Naive thymus-derived CD4-positive, alpha-beta T cell (primary cell): ENCODE measurements at regions of chr2 and their contacts with region 1.

Region 1: GRCh38 chr2:32010670-32011484 is at the start of gene MEMO1:
- DNase-seq: peak; percentile 82 to 96 (median 94)
- ATAC-seq: peak; percentile 88
- H3K4me3 ChIP-seq: peak within 1 kb of the TSS; percentile 76
- H3K4me3 Mint-ChIP-seq: peak within 1 kb of the TSS; percentile 77 to 95 (median 92)
- H3K27ac ChIP-seq: peak within 1 kb of the TSS; percentile 80
- H3K27ac Mint-ChIP-seq: peak within 1 kb of the TSS; percentile 86 to 96 (median 93)
- H3K4me1 ChIP-seq: peaks cover 28% of the 10 kb centered on the region in 2 donors
- H3K4me1 Mint-ChIP-seq: peaks cover 26 to 55% (median 43%) of the 10 kb centered on the region in 7 donors
- H3K27me3 ChIP-seq: no peaks in the 10 kb centered on the region
- H3K27me3 Mint-ChIP-seq: peaks cover 0 to 3% (median 0%) of the 10 kb centered on the region in 5 donors
- total RNA-seq, gene MEMO1: 44.5 to 49.2 (median 47.9) TPM

Region 2: GRCh38 chr2:31475692-31476091 is 535.2 kb before region 1 on chr2:
- CTCF ChIA-PET with region 1: no interaction called
- POLR2A ChIA-PET with region 1: no interaction called
- intact Hi-C with region 1: no loop called
- DNase-seq: no peak
- ATAC-seq: no peak
- H3K4me3 ChIP-seq: no peak overlapping the region
- H3K4me3 Mint-ChIP-seq: no peak overlapping the region
- H3K27ac ChIP-seq: no peak overlapping the region
- H3K27ac Mint-ChIP-seq: no peak overlapping the region
- H3K4me1 ChIP-seq: no peaks in the 10 kb centered on the region
- H3K4me1 Mint-ChIP-seq: no peaks in the 10 kb centered on the region
- H3K27me3 ChIP-seq: peaks cover 0 to 4% of the 10 kb centered on the region in 2 donors
- H3K27me3 Mint-ChIP-seq: peaks cover 0 to 38% (median 15%) of the 10 kb centered on the region in 5 donors

Region 3: GRCh38 chr2:31812051-31812798 is 198.7 kb before region 1 on chr2:
- CTCF ChIA-PET with region 1: no interaction called
- POLR2A ChIA-PET with region 1: no interaction called
- intact Hi-C with region 1: no loop called
- DNase-seq: peak in 7 of 9 donors; percentile 8 to 29 (median 23)
- ATAC-seq: peak; percentile 82
- H3K4me3 ChIP-seq: no peak overlapping the region
- H3K4me3 Mint-ChIP-seq: peak overlapping the region; percentile 3 to 62 (median 47)
- H3K27ac ChIP-seq: peak overlapping the region; percentile 40
- H3K27ac Mint-ChIP-seq: peak overlapping the region; percentile 38 to 89 (median 70)
- H3K4me1 ChIP-seq: peaks cover 0 to 8% of the 10 kb centered on the region in 2 donors
- H3K4me1 Mint-ChIP-seq: peaks cover 6 to 28% (median 19%) of the 10 kb centered on the region in 7 donors
- H3K27me3 ChIP-seq: no peaks in the 10 kb centered on the region
- H3K27me3 Mint-ChIP-seq: peaks cover 0 to 2% (median 0%) of the 10 kb centered on the region in 5 donors

Region 4: GRCh38 chr2:31937741-31938140 is 73.1 kb before region 1 on chr2:
- CTCF ChIA-PET with region 1: no interaction called
- POLR2A ChIA-PET with region 1: no interaction called
- intact Hi-C with region 1: loop called in 1 of 2 experiments (anchors 5 kb)
- DNase-seq: no peak
- ATAC-seq: no peak
- H3K4me3 ChIP-seq: no peak overlapping the region
- H3K4me3 Mint-ChIP-seq: no peak overlapping the region
- H3K27ac ChIP-seq: no peak overlapping the region
- H3K27ac Mint-ChIP-seq: no peak overlapping the region
- H3K4me1 ChIP-seq: peaks cover 9 to 10% of the 10 kb centered on the region in 2 donors
- H3K4me1 Mint-ChIP-seq: peaks cover 0 to 12% (median 2%) of the 10 kb centered on the region in 7 donors
- H3K27me3 ChIP-seq: no peaks in the 10 kb centered on the region
- H3K27me3 Mint-ChIP-seq: no peaks in the 10 kb centered on the region

Region 5: GRCh38 chr2:31980674-31981356 is 30.1 kb before region 1 on chr2:
- CTCF ChIA-PET with region 1: interaction called, 3 read pairs
- POLR2A ChIA-PET with region 1: no interaction called
- intact Hi-C with region 1: loop called in 1 of 2 experiments (anchors 2 kb)
- DNase-seq: peak in 4 of 9 donors; percentile 16 to 28 (median 19)
- ATAC-seq: peak; percentile 94
- H3K4me3 ChIP-seq: no peak overlapping the region
- H3K4me3 Mint-ChIP-seq: peak overlapping the region in 8 of 10 donors; percentile 4 to 52 (median 14)
- H3K27ac ChIP-seq: no peak overlapping the region
- H3K27ac Mint-ChIP-seq: peak overlapping the region in 7 of 9 donors; percentile 8 to 80 (median 40)
- H3K4me1 ChIP-seq: peaks cover 0 to 8% of the 10 kb centered on the region in 2 donors
- H3K4me1 Mint-ChIP-seq: peaks cover 19 to 44% (median 34%) of the 10 kb centered on the region in 7 donors
- H3K27me3 ChIP-seq: no peaks in the 10 kb centered on the region
- H3K27me3 Mint-ChIP-seq: no peaks in the 10 kb centered on the region

Region 6: GRCh38 chr2:32063310-32064161 is 52.7 kb after region 1 on chr2 and contains the start of gene SPAST:
- CTCF ChIA-PET with region 1: interaction called, 3 read pairs
- POLR2A ChIA-PET with region 1: interaction called, 8 read pairs
- intact Hi-C with region 1: loop called (anchors 1 kb)
- DNase-seq: peak; percentile 92 to 97 (median 95)
- ATAC-seq: peak; percentile 93
- H3K4me3 ChIP-seq: peak within 1 kb of the TSS; percentile 99
- H3K4me3 Mint-ChIP-seq: peak within 1 kb of the TSS; percentile 91 to 100 (median 98)
- H3K27ac ChIP-seq: peak within 1 kb of the TSS; percentile 88
- H3K27ac Mint-ChIP-seq: peak within 1 kb of the TSS; percentile 88 to 97 (median 92)
- H3K4me1 ChIP-seq: peaks cover 5 to 15% of the 10 kb centered on the region in 2 donors
- H3K4me1 Mint-ChIP-seq: peaks cover 22 to 46% (median 37%) of the 10 kb centered on the region in 7 donors
- H3K27me3 ChIP-seq: no peaks in the 10 kb centered on the region
- H3K27me3 Mint-ChIP-seq: peaks cover 0 to 1% (median 0%) of the 10 kb centered on the region in 5 donors
- total RNA-seq, gene SPAST: 16.3 to 21.0 (median 20.3) TPM

Region 7: GRCh38 chr2:32168513-32168912 is 157.6 kb after region 1 on chr2:
- CTCF ChIA-PET with region 1: no interaction called
- POLR2A ChIA-PET with region 1: no interaction called
- intact Hi-C with region 1: loop called (anchors 1 kb)
- DNase-seq: no peak
- ATAC-seq: no peak
- H3K4me3 ChIP-seq: no peak overlapping the region
- H3K4me3 Mint-ChIP-seq: no peak overlapping the region
- H3K27ac ChIP-seq: no peak overlapping the region
- H3K27ac Mint-ChIP-seq: peak overlapping the region in 4 of 9 donors; percentile 2 to 25 (median 10)
- H3K4me1 ChIP-seq: no peaks in the 10 kb centered on the region
- H3K4me1 Mint-ChIP-seq: peaks cover 17 to 61% (median 49%) of the 10 kb centered on the region in 7 donors
- H3K27me3 ChIP-seq: no peaks in the 10 kb centered on the region
- H3K27me3 Mint-ChIP-seq: no peaks in the 10 kb centered on the region

Region 8: GRCh38 chr2:32356735-32357644 is 346.1 kb after region 1 on chr2 and contains the start of gene BIRC6:
- CTCF ChIA-PET with region 1: no interaction called
- POLR2A ChIA-PET with region 1: no interaction called
- intact Hi-C with region 1: loop called in 1 of 2 experiments (anchors 1 kb)
- DNase-seq: peak; percentile 74 to 96 (median 82)
- ATAC-seq: peak; percentile 92
- H3K4me3 ChIP-seq: peak within 1 kb of the TSS; percentile 77
- H3K4me3 Mint-ChIP-seq: peak within 1 kb of the TSS; percentile 87 to 98 (median 92)
- H3K27ac ChIP-seq: peak within 1 kb of the TSS; percentile 92
- H3K27ac Mint-ChIP-seq: peak within 1 kb of the TSS; percentile 60 to 98 (median 92)
- H3K4me1 ChIP-seq: peaks cover 6 to 21% of the 10 kb centered on the region in 2 donors
- H3K4me1 Mint-ChIP-seq: peaks cover 29 to 44% (median 36%) of the 10 kb centered on the region in 7 donors
- H3K27me3 ChIP-seq: no peaks in the 10 kb centered on the region
- H3K27me3 Mint-ChIP-seq: no peaks in the 10 kb centered on the region
- total RNA-seq, gene BIRC6: 130 to 159 (median 145) TPM

Region 9: GRCh38 chr2:33475224-33476130 is 1464.6 kb after region 1 on chr2:
- CTCF ChIA-PET with region 1: no interaction called
- POLR2A ChIA-PET with region 1: no interaction called
- intact Hi-C with region 1: loop called (anchors 2 to 5 kb)
- DNase-seq: peak; percentile 61 to 89 (median 83)
- ATAC-seq: peak; percentile 86
- H3K4me3 ChIP-seq: peak overlapping the region; percentile 81
- H3K4me3 Mint-ChIP-seq: peak overlapping the region; percentile 88 to 99 (median 95)
- H3K27ac ChIP-seq: peak overlapping the region; percentile 91
- H3K27ac Mint-ChIP-seq: peak overlapping the region; percentile 95 to 100 (median 98)
- H3K4me1 ChIP-seq: peaks cover 9 to 11% of the 10 kb centered on the region in 2 donors
- H3K4me1 Mint-ChIP-seq: peaks cover 14 to 39% (median 32%) of the 10 kb centered on the region in 7 donors
- H3K27me3 ChIP-seq: no peaks in the 10 kb centered on the region
- H3K27me3 Mint-ChIP-seq: peaks cover 0 to 4% (median 0%) of the 10 kb centered on the region in 5 donors